ENCODE measurements at regions of chr16 and their contacts with region 1.

Region 1: DNA sequence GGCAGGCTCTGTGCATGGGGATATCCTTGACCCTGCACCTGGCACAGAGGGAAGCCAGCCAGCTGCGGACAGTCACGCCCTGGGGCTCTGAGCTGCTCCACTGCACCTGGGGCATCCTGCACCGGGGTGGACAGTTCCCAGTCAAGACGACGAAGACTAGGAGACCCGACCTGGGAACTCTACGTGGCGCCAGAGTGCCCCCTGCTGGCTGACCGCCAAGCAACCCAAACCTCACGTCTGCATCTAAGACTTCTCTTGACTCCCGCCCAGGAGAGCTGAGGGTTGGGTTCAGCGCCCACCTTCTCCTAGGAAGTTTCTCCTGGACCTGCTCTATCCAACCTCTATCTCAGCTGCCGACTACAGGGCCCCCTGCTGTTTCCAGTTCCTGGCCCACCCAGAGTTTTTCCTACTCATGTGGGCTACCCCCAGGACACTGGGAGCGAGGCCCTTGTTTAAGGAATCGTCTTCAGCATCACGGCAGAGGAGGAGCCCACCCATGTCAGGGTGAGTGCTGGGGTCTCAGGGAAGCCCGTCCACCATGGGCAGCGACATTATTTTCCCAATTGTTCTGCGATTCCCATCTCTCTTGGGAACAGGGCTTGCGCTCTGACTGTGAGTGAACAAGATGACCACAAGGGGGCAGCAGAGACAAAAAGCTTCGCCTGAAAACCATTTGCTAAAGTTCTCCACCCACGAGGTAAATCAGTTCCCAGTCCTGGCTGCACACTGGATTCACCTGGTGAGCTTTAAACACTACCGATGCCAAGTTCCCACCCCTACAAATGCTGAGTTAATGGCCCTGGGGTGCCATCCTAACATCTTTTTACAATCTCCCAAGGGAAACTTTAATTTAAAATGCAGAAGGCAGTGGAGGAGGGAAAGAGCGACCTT is 29.3 kb downstream of the TLE7 start:
- DNase-seq: peak; percentile 38 to 91 (median 74)

Region 2: DNA sequence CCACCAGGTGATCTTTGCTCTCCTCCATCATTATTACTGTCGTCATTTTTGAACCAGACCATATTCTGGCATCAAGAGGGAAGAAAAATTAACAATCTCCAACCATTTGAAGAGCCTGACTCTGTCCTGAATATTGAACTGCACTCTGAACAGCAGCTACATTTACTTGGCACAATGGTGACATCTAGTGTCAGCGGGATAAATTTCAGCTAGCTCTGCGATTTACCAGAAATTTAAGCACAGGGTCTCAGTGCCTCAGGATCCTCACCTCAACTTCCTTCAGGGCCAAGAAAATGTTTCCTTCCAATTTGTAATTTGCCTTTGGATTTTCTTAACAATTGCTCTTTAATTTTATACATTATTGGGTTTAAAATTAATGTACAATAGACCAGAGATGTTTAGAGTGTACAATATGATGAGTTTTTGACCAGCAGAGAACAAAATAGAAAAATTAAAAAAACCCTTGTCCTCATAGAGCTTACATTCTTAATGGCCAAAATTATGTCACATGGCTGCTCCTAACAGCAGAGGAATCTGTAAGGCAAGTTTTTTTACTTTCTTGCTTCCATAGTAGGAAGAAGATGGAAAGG is 87.4 kb after region 1 on chr16:
- intact Hi-C with region 1: loop called (anchors 5 kb)
- DNase-seq: peak in 31 of 42 donors; percentile 10 to 79 (median 47)